ENCODE measurements at regions of chr5 and their contacts with region 1.

Region 1: DNA sequence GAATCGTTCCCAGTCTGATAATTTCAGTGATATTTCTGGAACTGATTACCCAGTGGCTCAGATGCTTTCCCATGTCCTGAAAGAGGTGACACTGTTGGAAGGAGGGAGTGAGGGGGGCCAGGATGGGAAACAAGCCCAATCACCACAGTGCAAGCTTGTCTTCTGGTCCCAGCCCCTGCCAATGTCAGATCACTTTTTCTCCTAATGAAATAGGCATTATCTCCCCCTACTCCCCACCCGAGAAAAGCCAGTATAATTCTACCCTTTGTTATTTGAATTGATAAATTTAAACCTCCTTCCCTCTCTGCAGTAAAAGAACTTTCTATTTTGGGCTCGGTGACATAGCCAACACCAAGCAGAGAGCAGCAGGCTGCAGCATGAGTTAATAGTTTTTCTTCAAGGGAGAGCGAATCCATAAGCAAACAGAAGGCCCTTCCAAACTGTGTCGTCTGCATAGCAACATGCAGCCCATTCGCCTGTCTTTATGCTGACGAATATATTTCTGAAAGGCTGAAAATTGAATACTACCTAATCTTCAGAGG is 14.6 kb upstream of the PPP2CA start:
- DNase-seq: no peak
- H3K4me3 Mint-ChIP-seq: no peak overlapping the region
- H3K27ac Mint-ChIP-seq: no peak overlapping the region
- H3K4me1 Mint-ChIP-seq: peaks cover 7% of the 10 kb centered on the region
- H3K27me3 Mint-ChIP-seq: no peaks in the 10 kb centered on the region
- CTCF ChIP-seq: no peak

Region 2: GRCh38 chr5:134255418-134256175 is 15.1 kb after region 1 on chr5:
- CTCF ChIA-PET with region 1: interaction called, 5 read pairs
- POLR2A ChIA-PET with region 1: interaction called, 13 read pairs
- intact Hi-C with region 1: no loop called
- DNase-seq: peak; percentile 65
- H3K4me3 Mint-ChIP-seq: no peak overlapping the region
- H3K27ac Mint-ChIP-seq: peak overlapping the region; percentile 33
- H3K4me1 Mint-ChIP-seq: peaks cover 27% of the 10 kb centered on the region
- H3K27me3 Mint-ChIP-seq: no peaks in the 10 kb centered on the region
- CTCF ChIP-seq: no peak

Region 3: GRCh38 chr5:134273642-134274395 is 33.3 kb after region 1 on chr5:
- CTCF ChIA-PET with region 1: no interaction called
- POLR2A ChIA-PET with region 1: no interaction called
- intact Hi-C with region 1: no loop called
- DNase-seq: peak; percentile 41
- H3K4me3 Mint-ChIP-seq: no peak overlapping the region
- H3K27ac Mint-ChIP-seq: no peak overlapping the region
- H3K4me1 Mint-ChIP-seq: peaks cover 14% of the 10 kb centered on the region
- H3K27me3 Mint-ChIP-seq: no peaks in the 10 kb centered on the region
- CTCF ChIP-seq: no peak

Region 4: DNA sequence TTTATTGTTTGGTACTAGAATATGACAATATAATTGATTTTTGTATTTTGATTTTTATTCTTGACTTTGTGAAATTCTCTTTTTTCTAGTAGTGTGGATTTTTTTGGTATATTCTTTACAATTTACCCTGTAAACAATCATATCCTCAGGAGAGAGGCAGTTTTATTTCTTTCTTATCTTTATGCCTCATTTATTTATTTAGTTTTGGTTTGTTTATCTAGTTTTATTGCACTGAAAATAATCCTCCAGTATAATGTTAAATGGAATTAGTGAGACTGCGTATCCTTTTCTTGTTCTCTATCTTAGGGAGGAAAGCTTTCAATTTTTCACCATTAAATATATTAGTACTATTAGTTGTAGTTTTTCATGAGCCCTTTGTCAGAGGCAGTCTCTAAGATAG is 1049.2 kb after region 1 on chr5:
- CTCF ChIA-PET with region 1: no interaction called
- POLR2A ChIA-PET with region 1: no interaction called
- intact Hi-C with region 1: no loop called
- DNase-seq: no peak
- H3K4me3 Mint-ChIP-seq: no peak overlapping the region
- H3K27ac Mint-ChIP-seq: no peak overlapping the region
- H3K4me1 Mint-ChIP-seq: no peaks in the 10 kb centered on the region
- H3K27me3 Mint-ChIP-seq: no peaks in the 10 kb centered on the region
- CTCF ChIP-seq: no peak

Measured in MCF 10A (cell line).